ENCODE measurements at regions of chr14 and their contacts with region 1.

Region 1: DNA sequence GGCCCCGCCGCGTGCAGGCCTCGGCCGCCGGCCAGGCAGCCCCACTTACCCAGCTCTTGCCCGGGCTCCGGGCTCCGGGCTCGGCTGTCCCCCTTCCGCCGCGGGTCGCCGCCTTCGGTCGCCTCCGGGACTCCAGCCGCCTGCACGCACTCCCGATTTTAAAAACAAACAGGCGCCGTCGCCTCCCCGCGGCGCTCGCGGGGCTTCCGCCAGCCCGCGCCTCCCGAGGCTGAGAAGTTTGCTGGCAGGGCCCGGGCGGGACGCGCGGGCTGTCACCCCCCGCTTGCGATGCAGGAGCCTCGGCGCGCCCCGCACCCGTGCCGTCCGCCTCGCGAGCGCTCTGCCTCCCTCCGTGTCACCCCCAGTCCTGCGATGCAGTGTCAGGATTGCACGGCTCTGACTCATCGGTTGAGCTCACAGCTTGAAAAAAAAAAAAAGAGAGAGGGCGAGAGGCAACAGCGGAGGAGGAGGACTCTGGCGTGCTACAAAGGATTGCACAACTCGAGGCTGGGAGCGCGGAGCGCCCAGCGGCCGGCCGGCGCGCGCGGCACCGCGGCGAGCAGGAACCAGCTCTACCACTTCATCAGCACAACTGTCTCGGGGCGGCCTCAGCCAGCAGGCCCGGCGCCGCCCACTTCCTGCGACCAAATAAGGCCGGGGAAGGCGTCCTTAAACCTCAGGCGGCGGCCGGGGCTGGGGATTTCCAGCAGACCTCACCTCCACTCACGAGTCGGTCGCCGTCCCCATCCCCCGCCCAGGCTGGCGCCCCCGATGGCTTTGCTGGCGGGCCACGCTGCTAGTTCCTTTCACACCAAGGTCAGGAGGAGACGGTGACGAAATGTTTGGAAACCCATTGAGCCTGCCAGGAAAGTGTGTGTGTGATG is 45.8 kb upstream of the PNMA1 start:
- DNase-seq: peak; percentile 96 to 98 (median 98)
- H3K4me3 ChIP-seq: peak overlapping the region; percentile 72
- H3K4me3 Mint-ChIP-seq: peak overlapping the region; percentile 81 to 98 (median 92)
- H3K27ac ChIP-seq: peak overlapping the region; percentile 87
- H3K27ac Mint-ChIP-seq: peak overlapping the region; percentile 96 to 100 (median 99)
- H3K4me1 ChIP-seq: peaks cover 78% of the 10 kb centered on the region
- H3K4me1 Mint-ChIP-seq: peaks cover 78 to 85% (median 81%) of the 10 kb centered on the region in 3 donors
- H3K27me3 ChIP-seq: no peaks in the 10 kb centered on the region
- H3K27me3 Mint-ChIP-seq: peaks cover 0 to 4% of the 10 kb centered on the region in 2 donors

Region 2: GRCh38 chr14:73223049-73223448 is 536.9 kb before region 1 on chr14:
- CTCF ChIA-PET with region 1: no interaction called
- POLR2A ChIA-PET with region 1: no interaction called
- DNase-seq: no peak
- H3K4me3 ChIP-seq: no peak overlapping the region
- H3K4me3 Mint-ChIP-seq: no peak overlapping the region
- H3K27ac ChIP-seq: no peak overlapping the region
- H3K27ac Mint-ChIP-seq: peak overlapping the region in 2 of 8 donors; percentile 51 to 61
- H3K4me1 ChIP-seq: no peaks in the 10 kb centered on the region
- H3K4me1 Mint-ChIP-seq: no peaks in the 10 kb centered on the region
- H3K27me3 ChIP-seq: no peaks in the 10 kb centered on the region
- H3K27me3 Mint-ChIP-seq: no peaks in the 10 kb centered on the region

Region 3: DNA sequence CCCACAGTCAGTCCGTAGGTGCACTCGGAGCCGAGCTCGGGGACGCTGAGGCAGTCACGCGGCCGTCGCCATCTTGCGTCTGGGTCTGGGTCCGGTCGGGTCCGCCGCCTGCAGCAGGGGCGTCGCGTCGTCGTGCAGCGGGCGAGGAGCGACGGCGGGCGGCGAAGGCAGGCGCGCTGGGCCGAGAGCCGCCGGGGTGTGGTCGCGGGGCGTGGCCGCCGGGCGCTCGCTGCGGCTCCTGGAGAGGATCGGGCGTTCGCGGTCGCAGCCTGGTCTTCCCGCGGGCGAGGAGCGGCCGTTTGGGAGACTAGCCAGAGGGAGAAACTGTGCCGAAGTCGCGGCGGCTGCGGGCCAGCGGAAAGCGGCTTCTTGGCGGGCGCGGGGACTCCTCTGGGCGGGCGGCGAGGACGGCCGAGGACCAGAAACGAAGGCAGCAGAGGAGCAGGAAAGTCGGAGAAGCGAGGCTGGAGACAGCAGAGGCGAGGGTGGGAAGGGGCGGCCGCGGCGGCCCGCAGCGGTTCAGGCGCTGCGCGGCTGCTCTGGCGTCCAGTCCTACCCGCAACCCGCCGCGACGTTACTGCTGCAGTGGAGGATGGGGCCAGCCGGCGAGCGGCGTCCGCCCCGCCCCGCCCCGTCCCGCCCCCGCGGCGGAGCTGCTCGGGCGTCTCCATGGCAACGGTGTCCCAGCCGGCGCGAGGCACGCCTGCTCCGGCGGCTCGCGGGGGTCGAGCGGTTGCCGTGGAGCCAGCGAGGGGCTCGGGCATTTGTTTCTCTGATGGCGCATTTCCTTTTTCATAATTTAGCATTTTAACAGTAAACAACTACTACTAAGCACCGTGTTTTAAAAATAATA is 45.9 kb before region 1 on chr14 and contains the start of gene PNMA1:
- CTCF ChIA-PET with region 1: interaction called, 8 read pairs
- POLR2A ChIA-PET with region 1: interaction called, 16 read pairs
- DNase-seq: peak; percentile 84 to 92 (median 86)
- H3K4me3 ChIP-seq: peak within 1 kb of the TSS; percentile 75
- H3K4me3 Mint-ChIP-seq: peak within 1 kb of the TSS; percentile 91 to 99 (median 95)
- H3K27ac ChIP-seq: peak within 1 kb of the TSS; percentile 64
- H3K27ac Mint-ChIP-seq: peak within 1 kb of the TSS; percentile 93 to 98 (median 98)
- H3K4me1 ChIP-seq: peaks cover 6% of the 10 kb centered on the region
- H3K4me1 Mint-ChIP-seq: peaks cover 29 to 36% (median 34%) of the 10 kb centered on the region in 3 donors
- H3K27me3 ChIP-seq: no peaks in the 10 kb centered on the region
- H3K27me3 Mint-ChIP-seq: no peaks in the 10 kb centered on the region
- total RNA-seq, gene PNMA1: 56.8 to 61.0 TPM

Region 4: GRCh38 chr14:73741386-73741875 is 18.5 kb before region 1 on chr14:
- CTCF ChIA-PET with region 1: interaction called, 137 read pairs
- POLR2A ChIA-PET with region 1: interaction called, 67 read pairs
- DNase-seq: peak; percentile 62 to 79 (median 66)
- H3K4me3 ChIP-seq: peak overlapping the region; percentile 62
- H3K4me3 Mint-ChIP-seq: peak overlapping the region; percentile 79 to 94 (median 85)
- H3K27ac ChIP-seq: peak overlapping the region; percentile 68
- H3K27ac Mint-ChIP-seq: peak overlapping the region; percentile 91 to 98 (median 95)
- H3K4me1 ChIP-seq: peaks cover 66% of the 10 kb centered on the region
- H3K4me1 Mint-ChIP-seq: peaks cover 59 to 88% (median 64%) of the 10 kb centered on the region in 3 donors
- H3K27me3 ChIP-seq: no peaks in the 10 kb centered on the region
- H3K27me3 Mint-ChIP-seq: no peaks in the 10 kb centered on the region

Region 5: DNA sequence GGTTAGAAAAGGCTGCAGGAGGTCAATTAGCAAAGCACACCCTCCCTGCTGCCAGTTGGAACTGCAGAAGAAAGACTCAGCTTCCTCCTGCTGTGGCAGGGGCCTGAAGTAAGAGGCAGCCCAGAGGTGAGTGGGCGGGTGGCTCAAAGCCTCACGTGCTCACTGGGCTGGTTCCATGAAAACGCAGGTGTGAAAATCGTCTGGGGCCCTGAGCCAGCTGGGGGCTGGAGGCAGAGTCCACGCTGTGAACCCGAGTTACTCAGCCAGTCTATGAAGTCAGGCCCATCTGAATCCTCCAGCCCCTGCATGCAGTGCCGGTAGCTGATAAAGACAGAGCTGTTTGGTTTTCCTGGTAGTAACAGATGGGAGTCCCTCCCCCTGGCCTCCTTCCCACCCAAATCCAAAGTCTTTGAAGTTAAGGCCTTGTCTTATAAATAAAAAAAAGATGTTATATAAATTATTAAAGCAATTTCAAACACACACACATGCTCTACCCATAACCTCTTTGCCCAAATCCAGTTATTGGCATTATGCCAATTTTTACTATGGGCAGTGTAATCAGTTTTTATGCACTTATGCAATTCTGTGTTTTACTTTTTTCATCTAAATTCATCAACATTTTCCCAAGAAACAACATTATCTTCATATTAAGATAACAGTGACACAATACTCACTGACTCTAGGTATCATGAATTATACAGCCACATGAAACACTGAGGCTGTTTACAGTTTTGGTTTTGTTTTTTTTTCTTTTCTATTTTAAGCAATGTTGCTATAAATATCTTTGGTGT is 12.1 kb after region 1 on chr14:
- CTCF ChIA-PET with region 1: interaction called, 358 read pairs
- POLR2A ChIA-PET with region 1: interaction called, 48 read pairs
- DNase-seq: peak; percentile 53 to 83 (median 68)
- H3K4me3 ChIP-seq: peak overlapping the region; percentile 28
- H3K4me3 Mint-ChIP-seq: peak overlapping the region; percentile 60 to 82 (median 71)
- H3K27ac ChIP-seq: peak overlapping the region; percentile 49
- H3K27ac Mint-ChIP-seq: peak overlapping the region; percentile 85 to 99 (median 94)
- H3K4me1 ChIP-seq: peaks cover 66% of the 10 kb centered on the region
- H3K4me1 Mint-ChIP-seq: peaks cover 68 to 83% (median 73%) of the 10 kb centered on the region in 3 donors
- H3K27me3 ChIP-seq: no peaks in the 10 kb centered on the region
- H3K27me3 Mint-ChIP-seq: no peaks in the 10 kb centered on the region

Region 6: GRCh38 chr14:73825551-73826188 is 65.7 kb after region 1 on chr14:
- CTCF ChIA-PET with region 1: interaction called, 16 read pairs
- POLR2A ChIA-PET with region 1: interaction called, 10 read pairs
- DNase-seq: peak; percentile 61 to 87 (median 64)
- H3K4me3 ChIP-seq: no peak overlapping the region
- H3K4me3 Mint-ChIP-seq: no peak overlapping the region
- H3K27ac ChIP-seq: no peak overlapping the region
- H3K27ac Mint-ChIP-seq: no peak overlapping the region
- H3K4me1 ChIP-seq: no peaks in the 10 kb centered on the region
- H3K4me1 Mint-ChIP-seq: peaks cover 6 to 16% (median 16%) of the 10 kb centered on the region in 3 donors
- H3K27me3 ChIP-seq: no peaks in the 10 kb centered on the region
- H3K27me3 Mint-ChIP-seq: peaks cover 0 to 4% of the 10 kb centered on the region in 2 donors

Region 7: GRCh38 chr14:74161526-74162158 is 401.7 kb after region 1 on chr14:
- CTCF ChIA-PET with region 1: no interaction called
- POLR2A ChIA-PET with region 1: no interaction called
- DNase-seq: no peak
- H3K4me3 ChIP-seq: no peak overlapping the region
- H3K4me3 Mint-ChIP-seq: no peak overlapping the region
- H3K27ac ChIP-seq: no peak overlapping the region
- H3K27ac Mint-ChIP-seq: no peak overlapping the region
- H3K4me1 ChIP-seq: no peaks in the 10 kb centered on the region
- H3K4me1 Mint-ChIP-seq: peaks cover 0 to 6% (median 0%) of the 10 kb centered on the region in 3 donors
- H3K27me3 ChIP-seq: no peaks in the 10 kb centered on the region
- H3K27me3 Mint-ChIP-seq: no peaks in the 10 kb centered on the region

Measured in CD8-positive, alpha-beta memory T cell (primary cell).